Right ventricle myocardium inferior (tissue), 1 donor: ENCODE measurements at regions of chr16 and their contacts with region 1.

Region 1: GRCh38 chr16:352547-353403 is at the start of gene AXIN1:
- DNase-seq: peak; percentile 100
- ATAC-seq: peak; percentile 94
- total RNA-seq, gene AXIN1: 12.8 TPM

Region 2: DNA sequence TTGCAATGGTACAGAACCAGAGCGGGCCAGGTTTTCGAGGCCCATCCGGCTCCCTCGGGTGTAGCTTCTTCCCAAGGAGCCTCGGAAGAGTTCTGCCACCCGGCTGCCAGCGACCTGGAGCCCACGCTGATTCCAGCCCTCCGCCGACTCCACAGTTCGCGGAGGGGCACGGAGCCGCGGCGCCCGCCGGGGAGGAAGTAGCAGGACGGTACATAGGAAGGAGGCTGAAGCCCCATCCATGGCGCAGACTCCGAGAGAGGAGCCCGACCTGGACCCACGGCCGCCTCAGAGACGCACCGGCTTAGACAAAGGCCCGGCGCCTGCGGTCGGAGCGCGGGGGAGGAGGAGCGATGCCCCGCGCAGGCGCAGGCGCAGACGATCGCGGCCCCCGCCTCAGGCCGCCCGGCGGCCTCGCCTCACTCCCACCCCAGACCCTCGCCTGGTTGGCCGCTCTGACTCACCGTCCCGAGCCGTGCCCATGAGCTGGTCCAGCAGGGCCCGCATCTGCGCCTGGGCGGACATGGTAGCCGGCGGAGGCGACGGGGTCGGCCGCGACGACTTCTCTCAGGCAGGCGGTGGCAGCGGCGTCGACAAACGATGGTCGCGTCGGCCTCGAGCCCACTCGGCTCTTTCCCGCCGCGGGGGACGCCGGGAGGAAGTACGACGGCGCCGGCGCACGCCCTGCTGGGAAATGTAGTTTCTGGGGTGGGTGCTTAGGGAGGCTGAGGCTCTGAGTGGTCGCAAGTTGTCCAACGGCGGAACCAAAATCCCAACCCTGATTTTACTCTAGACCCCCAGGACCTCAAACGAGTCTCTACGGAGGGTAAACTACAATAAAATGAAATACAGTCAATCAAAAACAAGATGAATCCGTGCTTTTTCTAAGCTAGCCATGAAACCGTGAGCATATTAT is 123.7 kb before region 1 on chr16 and contains the start of gene LUC7L:
- intact Hi-C with region 1: loop called (anchors 5 kb)
- DNase-seq: peak; percentile 95
- ATAC-seq: peak; percentile 97
- total RNA-seq, gene LUC7L: 23.5 TPM